CD4-positive, alpha-beta T cell (primary cell): ENCODE measurements at regions of chr2 and their contacts with region 1.

Region 1: DNA sequence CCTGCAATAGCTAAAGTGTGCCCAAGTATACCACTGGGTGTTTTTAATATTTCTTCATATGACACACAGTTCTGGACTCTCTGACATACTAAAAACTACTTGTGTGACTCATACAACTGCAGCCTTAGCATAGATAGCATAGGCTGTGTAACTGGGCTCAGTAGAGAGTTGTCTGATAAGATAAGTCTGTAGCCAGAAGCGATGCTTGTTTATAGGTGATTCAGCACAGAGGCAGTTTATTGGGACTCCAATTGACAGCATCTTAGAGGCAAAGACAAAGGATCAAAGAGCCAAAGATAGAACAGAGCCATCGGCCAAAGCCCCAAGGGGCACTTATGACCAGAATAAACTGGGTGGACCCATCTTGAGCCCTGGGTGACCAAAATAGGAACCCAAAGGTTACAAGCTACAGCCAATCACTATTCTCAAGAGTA is 42.3 kb downstream of the AAK1 start:
- DNase-seq: no peak
- ATAC-seq: peak; percentile 58
- H3K4me3 ChIP-seq: no peak overlapping the region
- H3K4me3 Mint-ChIP-seq: peak overlapping the region; percentile 30
- H3K27ac ChIP-seq: no peak overlapping the region
- H3K27ac Mint-ChIP-seq: peak overlapping the region; percentile 78
- H3K4me1 ChIP-seq: peaks cover 50% of the 10 kb centered on the region
- H3K4me1 Mint-ChIP-seq: peaks cover 95% of the 10 kb centered on the region
- H3K27me3 ChIP-seq: no peaks in the 10 kb centered on the region
- H3K27me3 Mint-ChIP-seq: no peaks in the 10 kb centered on the region
- CTCF ChIP-seq: no peak

Region 2: GRCh38 chr2:69565431-69565839 is 35.8 kb before region 1 on chr2:
- CTCF ChIA-PET with region 1: interaction called, 14 read pairs
- POLR2A ChIA-PET with region 1: interaction called, 4 read pairs
- intact Hi-C with region 1: no loop called
- DNase-seq: peak; percentile 41 to 82 (median 62)
- ATAC-seq: peak; percentile 77
- H3K4me3 ChIP-seq: no peak overlapping the region
- H3K4me3 Mint-ChIP-seq: peak overlapping the region; percentile 65
- H3K27ac ChIP-seq: no peak overlapping the region
- H3K27ac Mint-ChIP-seq: peak overlapping the region; percentile 82
- H3K4me1 ChIP-seq: peaks cover 59% of the 10 kb centered on the region
- H3K4me1 Mint-ChIP-seq: peaks cover 96% of the 10 kb centered on the region
- H3K27me3 ChIP-seq: no peaks in the 10 kb centered on the region
- H3K27me3 Mint-ChIP-seq: no peaks in the 10 kb centered on the region
- CTCF ChIP-seq: peak; percentile 94

Region 3: DNA sequence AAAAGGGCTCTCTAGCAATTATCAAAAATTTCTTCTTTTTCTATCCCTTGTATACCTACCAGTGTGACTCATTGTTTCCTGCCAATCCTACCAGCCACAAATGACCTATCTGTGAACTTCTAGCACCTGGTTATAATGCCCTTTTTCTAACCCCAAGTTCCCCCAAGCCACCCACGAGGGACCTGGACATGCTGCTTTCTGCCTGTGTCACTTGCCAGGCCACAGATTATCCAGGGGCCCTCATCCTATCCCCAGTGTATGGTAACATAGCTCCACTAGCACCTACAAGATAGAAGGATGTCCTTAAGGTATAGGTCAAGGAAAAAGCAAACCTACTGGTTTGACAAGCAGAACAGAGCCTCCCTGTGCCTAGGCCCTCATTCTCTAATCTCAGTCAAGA is 15.6 kb after region 1 on chr2:
- CTCF ChIA-PET with region 1: interaction called, 7 read pairs
- POLR2A ChIA-PET with region 1: interaction called, 5 read pairs
- intact Hi-C with region 1: loop called in 1 of 2 experiments (anchors 2 kb)
- DNase-seq: peak in 9 of 14 experiments; percentile 8 to 75 (median 22)
- ATAC-seq: peak; percentile 72
- H3K4me3 ChIP-seq: no peak overlapping the region
- H3K4me3 Mint-ChIP-seq: peak overlapping the region; percentile 40
- H3K27ac ChIP-seq: no peak overlapping the region
- H3K27ac Mint-ChIP-seq: no peak overlapping the region
- H3K4me1 ChIP-seq: peaks cover 83% of the 10 kb centered on the region
- H3K4me1 Mint-ChIP-seq: peaks cover 45% of the 10 kb centered on the region
- H3K27me3 ChIP-seq: no peaks in the 10 kb centered on the region
- H3K27me3 Mint-ChIP-seq: no peaks in the 10 kb centered on the region
- CTCF ChIP-seq: no peak